ENCODE measurements at regions of chr15 and their contacts with region 1.

Region 1: DNA sequence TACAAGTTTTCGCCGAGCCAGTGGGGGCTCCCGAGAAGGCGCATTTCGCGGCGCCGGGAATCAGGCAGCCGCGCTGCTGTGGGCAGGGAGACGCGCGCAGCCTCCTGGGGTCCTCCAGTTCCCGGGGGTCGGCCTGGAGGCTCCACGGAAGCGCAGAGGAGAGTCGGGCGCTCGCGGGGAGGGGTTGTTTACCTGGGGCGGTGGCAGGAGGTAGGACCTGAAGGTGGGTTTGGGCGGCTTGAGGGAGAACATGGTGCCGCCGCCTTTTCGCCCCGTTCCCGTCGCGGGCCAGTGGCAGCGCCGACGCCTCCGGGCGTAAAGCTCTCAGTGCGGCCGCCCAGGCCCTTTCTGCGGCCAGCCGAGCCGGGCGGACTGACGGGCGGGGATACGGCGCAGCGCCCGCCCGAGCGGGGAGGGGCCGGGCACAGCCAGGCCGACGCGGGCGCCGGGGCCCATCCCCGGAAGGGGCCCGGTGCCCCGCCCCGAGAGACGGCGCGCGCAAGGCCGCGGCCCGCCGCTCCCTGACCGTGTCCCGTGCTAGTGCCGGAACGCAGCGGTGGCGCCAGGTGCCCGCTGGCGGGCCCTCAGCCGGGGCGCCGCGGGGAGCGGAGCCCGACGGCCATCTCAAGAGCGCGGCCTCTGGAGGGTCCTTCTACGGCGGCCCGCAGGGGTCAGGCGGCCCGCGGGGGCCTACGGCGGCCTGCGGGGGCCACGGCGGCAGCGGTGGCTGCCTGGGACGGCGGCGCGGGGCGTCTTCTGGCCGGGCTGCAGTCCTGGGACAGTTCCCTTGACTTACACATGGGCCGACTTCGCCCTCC is at the start of gene MTMR10:
- DNase-seq: peak; percentile 70 to 84 (median 82)
- H3K4me3 ChIP-seq: peak within 1 kb of the TSS; percentile 64 to 76
- H3K4me3 Mint-ChIP-seq: peak within 1 kb of the TSS; percentile 94 to 98 (median 96)
- H3K27ac ChIP-seq: peak within 1 kb of the TSS; percentile 76
- H3K27ac Mint-ChIP-seq: peak within 1 kb of the TSS; percentile 89 to 95 (median 94)
- H3K4me1 ChIP-seq: peaks cover 30% of the 10 kb centered on the region
- H3K4me1 Mint-ChIP-seq: peaks cover 19 to 32% (median 27%) of the 10 kb centered on the region in 4 donors
- H3K27me3 ChIP-seq: no peaks in the 10 kb centered on the region
- H3K27me3 Mint-ChIP-seq: no peaks in the 10 kb centered on the region
- total RNA-seq, gene MTMR10: 29.6 to 31.8 TPM

Region 2: DNA sequence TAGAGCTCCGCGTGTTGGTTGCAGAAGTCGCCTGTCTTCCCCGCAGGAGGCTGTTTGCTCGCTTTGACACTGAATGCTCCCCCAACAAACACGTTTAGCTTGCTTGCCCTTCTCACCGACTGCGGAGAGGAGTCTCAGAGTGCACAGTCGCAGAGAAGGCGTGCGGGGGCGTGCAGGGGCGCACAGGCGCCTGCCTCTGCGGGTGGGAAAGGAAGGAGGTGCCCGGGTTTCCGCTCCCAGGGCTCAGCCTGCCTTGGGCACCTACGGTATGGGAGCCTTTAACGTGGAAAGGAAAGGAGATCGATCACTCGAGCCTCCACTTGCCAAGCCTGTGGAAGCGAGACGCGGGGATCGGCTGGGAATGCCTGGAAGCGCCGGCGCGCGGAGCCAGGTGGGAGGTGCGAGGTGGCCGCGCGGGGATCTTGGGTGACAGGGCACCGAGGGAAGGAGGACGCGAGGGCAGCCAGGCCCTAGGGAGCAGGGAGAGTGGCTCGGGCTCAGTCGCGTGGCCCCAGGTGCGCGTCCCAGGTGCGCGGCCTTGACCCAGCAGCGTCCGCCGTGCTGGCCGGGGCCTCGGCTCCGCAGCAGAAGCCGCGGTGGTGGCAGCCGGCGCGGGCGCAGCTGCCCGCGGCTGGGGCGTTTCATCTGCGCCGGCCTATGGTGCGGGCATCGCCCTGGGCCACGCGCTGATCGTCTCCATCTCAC is 87.8 kb before region 1 on chr15 and contains the start of gene FAN1:
- CTCF ChIA-PET with region 1: no interaction called
- POLR2A ChIA-PET with region 1: interaction called, 5 read pairs
- intact Hi-C with region 1: loop called (anchors 1 kb)
- DNase-seq: peak; percentile 67 to 76 (median 71)
- H3K4me3 ChIP-seq: peak within 1 kb of the TSS; percentile 50 to 83
- H3K4me3 Mint-ChIP-seq: peak within 1 kb of the TSS; percentile 93 to 98 (median 96)
- H3K27ac ChIP-seq: peak within 1 kb of the TSS; percentile 32
- H3K27ac Mint-ChIP-seq: peak within 1 kb of the TSS; percentile 48 to 90 (median 82)
- H3K4me1 ChIP-seq: peaks cover 11% of the 10 kb centered on the region
- H3K4me1 Mint-ChIP-seq: peaks cover 18 to 42% (median 29%) of the 10 kb centered on the region in 4 donors
- H3K27me3 ChIP-seq: no peaks in the 10 kb centered on the region
- H3K27me3 Mint-ChIP-seq: no peaks in the 10 kb centered on the region
- total RNA-seq, gene FAN1: 25.9 TPM

Region 3: GRCh38 chr15:31111091-31111647 is 119.7 kb after region 1 on chr15:
- CTCF ChIA-PET with region 1: no interaction called
- POLR2A ChIA-PET with region 1: no interaction called
- intact Hi-C with region 1: no loop called
- DNase-seq: no peak
- H3K4me3 ChIP-seq: no peak overlapping the region
- H3K4me3 Mint-ChIP-seq: no peak overlapping the region
- H3K27ac ChIP-seq: no peak overlapping the region
- H3K27ac Mint-ChIP-seq: no peak overlapping the region
- H3K4me1 ChIP-seq: no peaks in the 10 kb centered on the region
- H3K4me1 Mint-ChIP-seq: no peaks in the 10 kb centered on the region
- H3K27me3 ChIP-seq: no peaks in the 10 kb centered on the region
- H3K27me3 Mint-ChIP-seq: peaks cover 6 to 12% of the 10 kb centered on the region in 2 donors

Region 4: GRCh38 chr15:31870328-31871165 is 879.1 kb after region 1 on chr15:
- CTCF ChIA-PET with region 1: no interaction called
- POLR2A ChIA-PET with region 1: no interaction called
- intact Hi-C with region 1: loop called (anchors 5 kb)
- DNase-seq: peak; percentile 78 to 93 (median 88)
- H3K4me3 ChIP-seq: peak within 1 kb of the TSS in 1 of 2 donors; percentile 74
- H3K4me3 Mint-ChIP-seq: peak within 1 kb of the TSS; percentile 87 to 95 (median 90)
- H3K27ac ChIP-seq: peak within 1 kb of the TSS; percentile 31
- H3K27ac Mint-ChIP-seq: peak within 1 kb of the TSS; percentile 86 to 97 (median 91)
- H3K4me1 ChIP-seq: peaks cover 14% of the 10 kb centered on the region
- H3K4me1 Mint-ChIP-seq: peaks cover 9 to 24% (median 16%) of the 10 kb centered on the region in 4 donors
- H3K27me3 ChIP-seq: no peaks in the 10 kb centered on the region
- H3K27me3 Mint-ChIP-seq: peaks cover 4 to 10% of the 10 kb centered on the region in 2 donors

Measured in CD4-positive, alpha-beta memory T cell (primary cell).